ENCODE measurements at regions of chr7 and their contacts with region 1.

Region 1: GRCh38 chr7:151782598-151783448 is 94.1 kb downstream of the PRKAG2 start:
- DNase-seq: peak; percentile 72 to 80
- ATAC-seq: peak; percentile 92 to 95 (median 95)
- H3K4me3 ChIP-seq: no peak overlapping the region
- H3K4me3 Mint-ChIP-seq: peak overlapping the region; percentile 69
- H3K27ac ChIP-seq: peak overlapping the region; percentile 32
- H3K27ac Mint-ChIP-seq: peak overlapping the region; percentile 41 to 68
- H3K4me1 ChIP-seq: peaks cover 10% of the 10 kb centered on the region
- H3K4me1 Mint-ChIP-seq: peaks cover 10 to 43% of the 10 kb centered on the region in 2 donors
- H3K27me3 ChIP-seq: no peaks in the 10 kb centered on the region
- H3K27me3 Mint-ChIP-seq: no peaks in the 10 kb centered on the region
- CTCF ChIP-seq: peak; percentile 94

Region 2: GRCh38 chr7:151506901-151507382 is 275.9 kb before region 1 on chr7:
- intact Hi-C with region 1: no loop called
- DNase-seq: no peak
- ATAC-seq: peak in 1 of 3 donors; percentile 14
- H3K4me3 ChIP-seq: no peak overlapping the region
- H3K4me3 Mint-ChIP-seq: no peak overlapping the region
- H3K27ac ChIP-seq: no peak overlapping the region
- H3K27ac Mint-ChIP-seq: no peak overlapping the region
- H3K4me1 ChIP-seq: peaks cover 4% of the 10 kb centered on the region
- H3K4me1 Mint-ChIP-seq: peaks cover 65 to 66% of the 10 kb centered on the region in 2 donors
- H3K27me3 ChIP-seq: no peaks in the 10 kb centered on the region
- H3K27me3 Mint-ChIP-seq: no peaks in the 10 kb centered on the region
- CTCF ChIP-seq: no peak

Region 3: DNA sequence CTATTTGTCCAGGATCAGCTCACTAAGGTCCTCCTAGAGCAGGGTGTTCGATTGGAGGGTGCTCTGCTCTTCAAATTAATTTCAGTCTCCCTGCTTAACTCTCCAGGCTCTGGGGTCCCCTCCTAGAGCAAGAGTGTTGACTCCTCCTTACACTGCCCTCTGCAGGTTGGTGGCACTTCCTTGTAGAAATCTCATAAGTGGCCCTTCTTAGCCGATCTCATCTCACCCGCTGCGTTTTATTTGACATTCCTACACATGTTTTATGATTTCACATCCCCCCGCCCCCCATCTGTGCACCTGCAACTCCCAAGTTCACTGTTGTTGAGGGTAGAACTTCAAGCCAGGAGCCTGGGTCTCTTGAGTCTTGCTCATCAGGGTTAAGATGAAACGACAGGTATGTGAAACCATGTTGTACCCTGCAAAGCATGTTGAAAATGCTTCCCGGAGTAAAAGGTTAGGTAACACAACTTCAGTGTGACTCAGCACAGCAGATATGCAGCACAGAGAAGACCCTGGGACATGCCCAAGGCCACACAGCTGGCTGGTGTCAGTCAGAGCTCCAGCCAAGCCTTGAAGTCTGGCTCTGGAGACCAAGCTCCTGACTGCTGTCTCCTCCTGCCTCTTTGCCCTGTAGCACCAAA is 77.1 kb before region 1 on chr7:
- intact Hi-C with region 1: no loop called
- DNase-seq: peak in 1 of 2 donors; percentile 44
- ATAC-seq: peak in 2 of 3 donors; percentile 47 to 60
- H3K4me3 ChIP-seq: no peak overlapping the region
- H3K4me3 Mint-ChIP-seq: no peak overlapping the region
- H3K27ac ChIP-seq: no peak overlapping the region
- H3K27ac Mint-ChIP-seq: no peak overlapping the region
- H3K4me1 ChIP-seq: no peaks in the 10 kb centered on the region
- H3K4me1 Mint-ChIP-seq: peaks cover 17 to 19% of the 10 kb centered on the region in 2 donors
- H3K27me3 ChIP-seq: no peaks in the 10 kb centered on the region
- H3K27me3 Mint-ChIP-seq: no peaks in the 10 kb centered on the region
- CTCF ChIP-seq: no peak

Region 4: DNA sequence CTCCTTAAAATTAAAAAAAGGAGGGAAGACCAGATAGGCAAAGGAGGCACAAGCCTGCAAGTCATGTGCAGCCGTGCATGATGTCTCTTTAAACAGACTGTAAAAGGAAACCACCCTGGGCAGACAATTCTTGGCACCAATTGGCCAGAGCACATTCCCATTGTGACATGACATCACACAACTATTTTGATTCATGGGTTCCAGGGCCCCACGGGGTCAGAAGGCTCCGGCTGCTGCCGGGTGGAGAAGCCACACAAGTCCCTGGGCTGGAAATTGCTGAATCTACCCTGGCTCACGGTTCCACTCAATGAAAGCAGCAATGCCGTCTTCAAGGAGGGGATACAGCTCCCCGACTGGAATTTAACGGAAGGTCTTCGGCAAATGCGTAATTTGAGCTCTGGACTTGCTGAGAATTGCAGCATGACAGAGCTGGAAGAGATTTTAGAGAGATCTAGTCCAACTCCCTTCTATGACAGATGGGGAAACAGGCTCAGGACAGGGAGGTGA is 46.4 kb before region 1 on chr7:
- intact Hi-C with region 1: no loop called
- DNase-seq: no peak
- ATAC-seq: no peak
- H3K4me3 ChIP-seq: no peak overlapping the region
- H3K4me3 Mint-ChIP-seq: no peak overlapping the region
- H3K27ac ChIP-seq: no peak overlapping the region
- H3K27ac Mint-ChIP-seq: no peak overlapping the region
- H3K4me1 ChIP-seq: no peaks in the 10 kb centered on the region
- H3K4me1 Mint-ChIP-seq: peaks cover 16 to 18% of the 10 kb centered on the region in 2 donors
- H3K27me3 ChIP-seq: no peaks in the 10 kb centered on the region
- H3K27me3 Mint-ChIP-seq: no peaks in the 10 kb centered on the region
- CTCF ChIP-seq: no peak

Region 5: GRCh38 chr7:151932358-151932876 is 149.6 kb after region 1 on chr7:
- intact Hi-C with region 1: loop called (anchors 5 kb)
- DNase-seq: no peak
- ATAC-seq: no peak
- H3K4me3 ChIP-seq: no peak overlapping the region
- H3K4me3 Mint-ChIP-seq: no peak overlapping the region
- H3K27ac ChIP-seq: no peak overlapping the region
- H3K27ac Mint-ChIP-seq: no peak overlapping the region
- H3K4me1 ChIP-seq: peaks cover 14% of the 10 kb centered on the region
- H3K4me1 Mint-ChIP-seq: peaks cover 16 to 17% of the 10 kb centered on the region in 2 donors
- H3K27me3 ChIP-seq: no peaks in the 10 kb centered on the region
- H3K27me3 Mint-ChIP-seq: peaks cover 0 to 7% of the 10 kb centered on the region in 2 donors
- CTCF ChIP-seq: no peak

Region 6: DNA sequence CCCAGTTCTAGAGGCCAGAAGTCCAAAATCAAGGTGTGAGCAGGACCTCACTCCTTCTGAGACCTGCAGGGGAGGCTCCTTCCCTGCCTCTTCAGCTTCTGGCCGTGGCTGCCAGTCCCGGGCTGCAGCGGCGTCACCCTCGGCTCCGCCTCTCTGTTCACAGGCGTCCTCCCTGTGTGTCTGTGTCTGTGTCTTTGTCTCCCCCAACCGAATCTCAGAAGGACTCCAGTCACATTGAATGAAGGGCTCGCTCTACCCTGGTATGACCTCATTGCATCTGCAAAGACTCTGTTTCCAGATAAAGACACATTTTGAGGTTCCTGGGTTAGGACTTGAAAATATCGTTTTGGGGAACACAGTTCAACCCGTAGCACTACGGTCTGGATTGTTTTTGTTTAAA is 209.6 kb after region 1 on chr7:
- intact Hi-C with region 1: loop called (anchors 1 kb)
- DNase-seq: peak in 1 of 2 donors; percentile 68
- ATAC-seq: peak; percentile 88 to 97 (median 89)
- H3K4me3 ChIP-seq: no peak overlapping the region
- H3K4me3 Mint-ChIP-seq: no peak overlapping the region
- H3K27ac ChIP-seq: no peak overlapping the region
- H3K27ac Mint-ChIP-seq: no peak overlapping the region
- H3K4me1 ChIP-seq: no peaks in the 10 kb centered on the region
- H3K4me1 Mint-ChIP-seq: no peaks in the 10 kb centered on the region
- H3K27me3 ChIP-seq: peaks cover 2% of the 10 kb centered on the region
- H3K27me3 Mint-ChIP-seq: peaks cover 18 to 40% of the 10 kb centered on the region in 2 donors
- CTCF ChIP-seq: no peak

Region 7: DNA sequence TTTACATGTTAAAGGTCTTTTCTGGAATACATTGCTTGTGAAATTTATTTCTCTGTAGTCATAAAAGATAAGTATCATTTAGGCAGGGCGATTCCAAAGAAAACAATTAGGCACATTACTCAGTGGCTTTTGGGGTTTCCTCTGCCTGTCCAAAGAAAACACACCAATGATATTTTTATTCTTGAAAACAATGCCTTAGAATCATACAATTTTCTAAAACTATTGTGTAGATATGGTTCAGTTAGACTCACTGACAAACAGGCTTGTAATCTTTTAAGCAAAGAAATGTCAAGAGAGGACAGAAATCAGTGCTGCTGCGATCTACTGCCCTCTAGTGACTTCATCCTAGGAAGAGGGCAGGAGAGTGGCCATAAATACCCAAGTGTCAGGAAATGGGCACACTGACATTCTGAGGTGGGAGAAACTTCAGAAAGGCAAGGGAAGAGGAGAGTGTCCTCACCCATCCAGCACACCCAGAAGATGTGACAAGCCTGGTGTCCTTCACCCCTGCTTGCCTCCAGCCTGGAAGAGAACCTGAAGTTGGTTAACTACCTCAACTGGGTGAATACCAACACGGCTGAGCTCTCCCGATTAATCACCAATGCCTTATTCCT is 363.1 kb after region 1 on chr7:
- intact Hi-C with region 1: loop called (anchors 2 kb)
- DNase-seq: peak in 1 of 2 donors; percentile 70
- ATAC-seq: peak in 2 of 3 donors; percentile 55 to 62
- H3K4me3 ChIP-seq: no peak overlapping the region
- H3K4me3 Mint-ChIP-seq: no peak overlapping the region
- H3K27ac ChIP-seq: no peak overlapping the region
- H3K27ac Mint-ChIP-seq: peak overlapping the region; percentile 79 to 88
- H3K4me1 ChIP-seq: peaks cover 8% of the 10 kb centered on the region
- H3K4me1 Mint-ChIP-seq: peaks cover 28 to 33% of the 10 kb centered on the region in 2 donors
- H3K27me3 ChIP-seq: no peaks in the 10 kb centered on the region
- H3K27me3 Mint-ChIP-seq: no peaks in the 10 kb centered on the region
- CTCF ChIP-seq: peak; percentile 36

Measured in natural killer cell (primary cell).